Prostate gland (tissue), 2 donors: ENCODE measurements at regions of chr9 and their contacts with region 1.

Region 1: DNA sequence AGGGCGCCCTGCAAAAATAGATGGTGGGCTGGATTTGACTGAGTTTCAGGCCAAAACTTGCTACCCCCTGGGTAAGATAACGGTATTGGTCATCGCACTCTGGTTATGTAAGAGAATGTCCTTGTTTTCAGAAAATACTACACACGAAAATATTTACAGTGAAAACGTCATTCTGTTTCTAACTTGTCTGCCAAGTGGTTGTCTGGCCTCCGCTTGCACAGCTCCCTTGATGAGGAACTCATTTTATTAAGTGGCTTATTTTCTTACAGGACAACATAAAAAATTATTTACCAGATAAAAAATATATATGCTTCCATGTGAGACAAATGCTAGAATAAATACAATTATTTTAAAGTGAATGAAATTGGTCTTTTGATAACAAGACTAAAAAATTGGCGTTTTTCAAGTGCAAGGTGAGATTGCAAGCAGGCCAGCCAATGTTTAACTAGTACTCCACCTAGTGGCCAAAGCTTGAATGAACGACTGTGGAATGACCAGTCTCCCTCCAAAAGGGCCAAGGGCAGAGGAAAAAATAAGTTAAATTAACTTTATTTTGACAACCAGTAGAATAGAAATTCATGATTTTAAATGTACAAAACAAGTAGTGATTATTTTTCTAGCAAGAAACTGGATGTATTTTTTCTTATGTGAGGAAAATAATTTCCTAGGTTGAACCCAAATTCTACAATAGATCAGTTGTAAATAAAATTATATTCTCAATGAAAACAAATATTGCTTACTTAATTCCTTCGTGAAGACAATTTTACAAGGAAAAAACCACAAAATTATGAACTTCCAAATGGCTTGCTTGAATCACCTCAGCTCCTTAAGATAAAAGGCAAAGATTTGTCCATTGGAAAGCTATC is 93.2 kb downstream of the ZFAND5 start:
- DNase-seq: peak; percentile 51
- H3K4me3 ChIP-seq: no peak overlapping the region
- H3K27ac ChIP-seq: no peak overlapping the region
- H3K4me1 ChIP-seq: no peaks in the 10 kb centered on the region
- H3K27me3 ChIP-seq: no peaks in the 10 kb centered on the region
- CTCF ChIP-seq: peak; percentile 75 to 89 (median 80)
- POLR2A ChIP-seq: no peak

Region 2: DNA sequence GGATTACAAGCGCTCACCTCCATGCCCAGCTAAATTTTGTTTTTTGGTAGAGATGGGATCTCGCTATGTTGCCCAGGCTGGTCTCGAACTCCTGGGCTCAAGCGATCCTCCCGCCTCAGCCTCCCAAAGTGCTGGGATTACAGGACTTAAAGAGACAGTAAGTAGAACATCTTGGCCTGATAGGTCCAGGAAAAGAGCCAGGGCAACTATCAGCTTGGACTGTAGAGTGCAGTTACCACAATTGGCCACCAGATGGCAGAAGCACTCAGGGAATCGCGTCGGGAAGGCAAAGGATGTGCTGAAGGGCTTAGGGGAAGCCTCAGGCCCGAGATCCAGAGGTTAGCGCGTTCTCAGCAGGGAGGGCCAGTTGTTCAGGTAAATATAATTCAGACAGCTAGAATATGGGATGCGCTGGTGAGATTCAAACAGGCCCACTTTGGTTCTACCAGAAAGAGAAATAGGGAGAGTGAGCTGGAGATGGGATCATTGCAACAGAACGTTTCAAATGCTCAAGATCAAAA is 232.9 kb before region 1 on chr9:
- intact Hi-C with region 1: loop called (anchors 2 kb)
- DNase-seq: peak; percentile 65
- H3K4me3 ChIP-seq: no peak overlapping the region
- H3K27ac ChIP-seq: no peak overlapping the region
- H3K4me1 ChIP-seq: no peaks in the 10 kb centered on the region
- H3K27me3 ChIP-seq: no peaks in the 10 kb centered on the region
- CTCF ChIP-seq: peak; percentile 86 to 97 (median 94)
- POLR2A ChIP-seq: no peak